ENCODE measurements at regions of chr1 and their contacts with region 1.

Region 1: DNA sequence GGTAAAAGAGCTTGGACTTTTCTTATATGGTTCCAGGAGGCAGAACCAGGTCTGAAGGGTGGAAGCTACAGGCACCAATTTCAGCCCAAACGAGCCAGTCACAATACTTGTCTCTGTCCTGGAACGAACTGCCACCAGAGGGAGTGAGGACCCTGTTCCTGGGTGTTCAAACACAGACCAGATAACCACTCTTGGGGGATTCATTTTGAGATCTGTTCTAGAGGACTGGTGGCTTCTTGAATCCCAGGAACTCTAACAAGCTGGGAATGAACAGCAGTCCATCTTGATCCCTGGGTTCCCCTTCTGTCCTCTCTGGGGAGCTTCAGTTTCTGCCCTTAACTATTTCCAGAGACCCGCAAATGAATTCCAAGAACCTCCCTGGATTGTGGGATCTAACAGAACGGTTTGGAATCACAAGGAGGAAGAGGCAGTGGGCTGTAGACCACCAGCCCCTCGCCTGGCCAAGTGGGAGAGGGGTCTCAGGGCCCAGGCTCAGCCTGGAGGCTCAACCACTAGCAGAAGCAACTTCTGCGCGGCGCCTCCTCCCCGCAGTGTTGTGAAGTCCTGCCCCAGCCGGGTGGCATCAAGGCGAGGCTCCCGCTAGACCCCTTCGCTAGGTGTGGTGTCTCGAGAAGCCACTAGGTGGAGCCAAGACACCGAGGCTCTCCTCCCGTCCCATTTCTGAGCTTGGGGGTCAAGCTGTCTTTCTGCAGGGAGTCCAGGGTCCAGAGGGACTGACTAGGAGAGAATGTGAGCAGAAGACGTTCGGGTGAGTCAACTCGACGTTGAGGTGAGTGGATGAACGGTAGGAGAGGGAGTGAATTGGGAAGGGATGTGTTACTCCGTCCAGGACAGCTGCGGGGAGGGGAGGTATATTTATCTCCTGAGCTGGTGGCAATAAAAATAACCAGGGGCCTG is 12.1 kb upstream of the NES start:
- DNase-seq: peak; percentile 72 to 84 (median 83)
- H3K4me3 ChIP-seq: no peak overlapping the region
- H3K27ac ChIP-seq: no peak overlapping the region
- H3K4me1 ChIP-seq: peaks cover 2% of the 10 kb centered on the region
- H3K27me3 ChIP-seq: no peaks in the 10 kb centered on the region
- CTCF ChIP-seq: peak; percentile 91 to 92 (median 92)
- EP300 ChIP-seq: no peak
- POLR2A ChIP-seq: no peak

Region 2: GRCh38 chr1:156652131-156652991 is 36.9 kb before region 1 on chr1:
- intact Hi-C with region 1: no loop called
- DNase-seq: peak in 2 of 5 donors; percentile 37 to 58
- H3K4me3 ChIP-seq: no peak overlapping the region
- H3K27ac ChIP-seq: no peak overlapping the region
- H3K4me1 ChIP-seq: no peaks in the 10 kb centered on the region
- H3K27me3 ChIP-seq: no peaks in the 10 kb centered on the region
- CTCF ChIP-seq: no peak
- EP300 ChIP-seq: no peak
- POLR2A ChIP-seq: no peak

Region 3: GRCh38 chr1:156728597-156729462 is 39.5 kb after region 1 on chr1 and contains the start of gene ISG20L2:
- intact Hi-C with region 1: loop called (anchors 1 to 2 kb)
- DNase-seq: peak; percentile 97 to 99 (median 98)
- H3K4me3 ChIP-seq: peak within 1 kb of the TSS; percentile 62
- H3K27ac ChIP-seq: peak within 1 kb of the TSS; percentile 93 to 98
- H3K4me1 ChIP-seq: peaks cover 16% of the 10 kb centered on the region
- H3K27me3 ChIP-seq: no peaks in the 10 kb centered on the region
- CTCF ChIP-seq: peak in 1 of 3 donors; percentile 14
- EP300 ChIP-seq: peak; percentile 86
- POLR2A ChIP-seq: peak; percentile 91
- total RNA-seq, gene ISG20L2: 11.7 to 33.8 (median 26.1) TPM